Right lobe of liver (tissue), 6 donors: ENCODE measurements at regions of chr2 and their contacts with region 1.

Region 1: GRCh38 chr2:205925373-205926337 is 160.3 kb downstream of the INO80D start:
- DNase-seq: peak; percentile 79 to 86 (median 84)
- ATAC-seq: peak; percentile 82 to 88 (median 85)
- H3K4me3 ChIP-seq: peak overlapping the region in 2 of 3 donors; percentile 16 to 17
- H3K27ac ChIP-seq: no peak overlapping the region
- H3K4me1 ChIP-seq: peaks cover 0 to 14% (median 6%) of the 10 kb centered on the region in 4 donors
- H3K27me3 ChIP-seq: no peaks in the 10 kb centered on the region
- CTCF ChIP-seq: peak; percentile 92 to 95 (median 92)
- POLR2A ChIP-seq: no peak

Region 2: GRCh38 chr2:205766779-205767359 is 158.8 kb before region 1 on chr2:
- intact Hi-C with region 1: loop called in 1 of 2 experiments (anchors 10 kb)
- DNase-seq: peak in 1 of 3 donors; percentile 52
- ATAC-seq: peak; percentile 44 to 69 (median 55)
- H3K4me3 ChIP-seq: no peak overlapping the region
- H3K27ac ChIP-seq: no peak overlapping the region
- H3K4me1 ChIP-seq: peaks cover 0 to 7% (median 0%) of the 10 kb centered on the region in 4 donors
- H3K27me3 ChIP-seq: no peaks in the 10 kb centered on the region
- CTCF ChIP-seq: peak; percentile 72 to 89 (median 83)
- POLR2A ChIP-seq: no peak

Region 3: GRCh38 chr2:205785507-205786260 is 140.0 kb before region 1 on chr2:
- intact Hi-C with region 1: no loop called
- DNase-seq: no peak
- ATAC-seq: no peak
- H3K4me3 ChIP-seq: no peak overlapping the region
- H3K27ac ChIP-seq: no peak overlapping the region
- H3K4me1 ChIP-seq: peaks cover 0 to 14% (median 2%) of the 10 kb centered on the region in 4 donors
- H3K27me3 ChIP-seq: no peaks in the 10 kb centered on the region
- CTCF ChIP-seq: no peak
- POLR2A ChIP-seq: no peak